ENCODE measurements at regions of chr3 and their contacts with region 1.

Region 1: DNA sequence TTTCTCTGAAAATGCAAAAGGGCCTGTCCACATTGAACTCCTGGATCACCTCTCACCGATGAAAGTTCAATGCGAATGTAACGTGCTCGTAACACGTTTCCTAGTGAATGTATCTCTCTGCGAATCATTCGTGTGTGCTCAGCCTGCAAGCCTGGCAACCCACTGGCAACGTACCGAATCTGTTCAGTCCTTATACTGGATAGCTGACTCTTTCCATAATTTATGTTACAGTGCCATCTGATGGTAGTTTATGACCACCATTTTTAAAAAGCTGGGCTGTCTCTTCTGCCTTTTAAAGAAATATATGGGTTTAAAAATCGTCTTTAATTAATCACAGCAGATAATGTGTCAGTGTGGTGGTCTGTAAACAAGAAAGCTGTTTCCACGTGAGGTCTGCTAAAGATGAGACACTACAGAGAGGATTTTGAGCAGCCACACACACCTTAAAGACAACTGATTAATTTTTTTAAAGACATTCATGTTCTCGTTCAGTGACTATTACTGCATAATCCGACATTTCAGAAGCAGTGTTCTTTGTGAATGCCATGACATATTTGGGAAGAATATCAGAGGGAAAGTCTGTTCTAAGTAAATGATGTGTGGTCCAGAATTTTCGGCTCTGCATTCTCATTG is 69.4 kb upstream of the FOXP1 start:
- DNase-seq: peak; percentile 72
- ATAC-seq: peak; percentile 91
- H3K4me3 ChIP-seq: no peak overlapping the region
- H3K27ac ChIP-seq: no peak overlapping the region
- H3K4me1 ChIP-seq: no peaks in the 10 kb centered on the region
- H3K27me3 ChIP-seq: peaks cover 6% of the 10 kb centered on the region; the same call in 1 of the 2 replicates
- CTCF ChIP-seq: peak; percentile 76
- POLR2A ChIP-seq: no peak
- RAD21 ChIP-seq: peak; percentile 89

Region 2: DNA sequence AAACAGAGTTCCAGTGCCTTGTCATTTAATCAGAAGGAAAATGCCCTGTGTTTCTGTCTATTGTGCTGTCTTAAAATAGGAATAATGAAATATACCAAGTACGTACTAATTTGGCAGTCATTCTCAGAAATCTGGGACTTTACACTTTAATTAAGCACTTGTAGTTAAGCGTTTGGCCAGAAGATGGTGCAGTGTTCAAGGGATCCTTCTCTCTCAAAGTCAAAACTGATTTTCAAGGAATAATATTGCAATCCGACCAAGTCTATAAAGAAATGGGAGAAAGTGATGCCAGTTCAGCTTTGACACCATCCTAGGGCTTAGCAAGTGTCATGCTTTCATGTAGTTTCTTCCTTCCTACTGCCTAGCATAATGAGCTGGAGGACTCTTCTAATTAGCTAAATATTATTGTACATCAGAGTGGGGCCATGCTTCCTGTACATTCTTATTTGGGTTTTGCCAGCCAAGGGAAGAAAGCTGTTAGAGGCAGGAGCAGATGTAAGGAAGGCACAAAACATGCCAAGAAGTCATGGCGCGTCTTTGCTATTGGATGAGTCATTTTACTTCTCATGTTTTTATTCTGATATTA is 1588.6 kb before region 1 on chr3:
- CTCF ChIA-PET with region 1: no interaction called
- POLR2A ChIA-PET with region 1: no interaction called
- dilution Hi-C with region 1: no loop called
- in situ Hi-C with region 1: loop called (anchors 25 kb)
- intact Hi-C with region 1: loop called (anchors 1 kb)
- DNase-seq: peak; percentile 38
- ATAC-seq: peak; percentile 77
- H3K4me3 ChIP-seq: no peak overlapping the region
- H3K27ac ChIP-seq: no peak overlapping the region
- H3K4me1 ChIP-seq: no peaks in the 10 kb centered on the region
- H3K27me3 ChIP-seq: peaks cover 29% of the 10 kb centered on the region
- CTCF ChIP-seq: peak; percentile 64
- POLR2A ChIP-seq: no peak
- RAD21 ChIP-seq: peak; percentile 70

Region 3: GRCh38 chr3:70539908-70540307 is 1113.0 kb before region 1 on chr3:
- CTCF ChIA-PET with region 1: no interaction called
- POLR2A ChIA-PET with region 1: no interaction called
- dilution Hi-C with region 1: no loop called
- in situ Hi-C with region 1: loop called (anchors 10 kb)
- intact Hi-C with region 1: no loop called
- DNase-seq: no peak
- ATAC-seq: no peak
- H3K4me3 ChIP-seq: no peak overlapping the region
- H3K27ac ChIP-seq: no peak overlapping the region
- H3K4me1 ChIP-seq: no peaks in the 10 kb centered on the region
- H3K27me3 ChIP-seq: peaks cover 34% of the 10 kb centered on the region
- CTCF ChIP-seq: no peak
- POLR2A ChIP-seq: no peak
- RAD21 ChIP-seq: no peak

Region 4: DNA sequence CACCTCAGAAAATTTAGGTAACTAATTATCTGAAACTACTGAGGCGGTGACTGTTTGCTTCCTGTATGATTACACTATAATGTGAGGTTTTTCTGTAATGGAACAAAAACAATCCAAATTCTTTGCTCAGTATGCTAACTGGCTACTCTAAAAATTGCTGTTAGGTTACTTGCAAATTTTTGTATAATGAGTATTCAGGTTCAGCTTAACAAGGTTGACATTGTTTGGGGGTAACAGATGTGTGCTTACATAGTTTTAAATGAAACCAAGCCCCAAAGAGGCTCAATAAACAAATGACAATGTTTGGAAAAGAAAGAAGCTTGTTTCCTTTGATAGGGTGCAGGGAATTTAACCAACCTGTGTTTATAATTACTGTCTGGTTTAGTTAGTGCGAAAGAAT is 925.9 kb before region 1 on chr3:
- CTCF ChIA-PET with region 1: no interaction called
- POLR2A ChIA-PET with region 1: no interaction called
- dilution Hi-C with region 1: no loop called
- in situ Hi-C with region 1: no loop called
- intact Hi-C with region 1: loop called (anchors 5 kb)
- DNase-seq: peak; percentile 89
- ATAC-seq: peak; percentile 71
- H3K4me3 ChIP-seq: no peak overlapping the region
- H3K27ac ChIP-seq: no peak overlapping the region
- H3K4me1 ChIP-seq: peaks cover 9% of the 10 kb centered on the region
- H3K27me3 ChIP-seq: no peaks in the 10 kb centered on the region
- CTCF ChIP-seq: no peak
- POLR2A ChIP-seq: no peak
- RAD21 ChIP-seq: no peak

Region 5: DNA sequence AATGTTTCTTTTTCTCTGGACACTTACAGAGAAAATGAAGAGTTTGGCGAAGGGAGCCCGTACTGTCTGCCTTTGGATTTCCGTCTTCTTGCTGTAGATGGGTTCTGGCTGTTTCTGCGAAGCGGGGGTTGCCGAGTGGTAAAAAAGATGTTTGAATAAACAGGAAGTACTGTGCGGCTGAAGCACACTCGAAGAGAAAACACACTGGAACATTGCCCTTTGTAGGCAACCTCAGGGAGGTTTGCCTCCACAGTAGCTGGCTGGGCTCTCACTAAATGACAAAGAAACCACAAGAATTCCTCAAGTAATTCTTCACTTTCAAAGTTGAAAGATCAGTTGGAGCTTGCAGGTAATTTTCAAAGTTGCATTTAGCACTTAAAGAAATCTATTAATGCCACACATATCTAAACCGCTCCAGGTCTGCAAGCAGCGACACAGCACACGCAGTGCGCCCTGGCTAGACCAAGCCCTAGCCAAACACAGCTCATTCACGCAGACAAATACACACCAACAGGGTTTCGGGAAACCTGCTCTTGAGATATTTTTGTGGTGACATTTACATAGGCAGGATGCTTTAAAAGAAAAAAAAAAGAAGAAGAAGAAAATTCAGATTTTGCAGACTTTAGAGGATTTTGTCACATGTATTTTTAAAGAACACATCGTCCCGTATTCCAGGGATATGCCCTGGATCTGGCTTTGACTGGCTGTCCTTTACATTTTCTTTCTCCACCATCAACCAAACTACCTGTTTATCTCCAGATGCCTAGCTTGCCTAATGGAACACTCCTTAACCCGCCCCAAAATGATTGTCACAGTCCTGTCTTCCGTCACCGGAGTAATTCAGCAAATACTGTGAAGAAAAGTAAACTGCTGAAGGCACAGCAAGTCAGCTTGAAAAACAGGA is 522.2 kb before region 1 on chr3:
- CTCF ChIA-PET with region 1: no interaction called
- POLR2A ChIA-PET with region 1: no interaction called
- dilution Hi-C with region 1: no loop called
- in situ Hi-C with region 1: no loop called
- intact Hi-C with region 1: loop called (anchors 2 kb)
- DNase-seq: peak; percentile 83
- ATAC-seq: peak; percentile 66
- H3K4me3 ChIP-seq: peak overlapping the region; percentile 64
- H3K27ac ChIP-seq: peak overlapping the region; percentile 99
- H3K4me1 ChIP-seq: peaks cover 11% of the 10 kb centered on the region
- H3K27me3 ChIP-seq: no peaks in the 10 kb centered on the region
- CTCF ChIP-seq: no peak
- POLR2A ChIP-seq: peak; percentile 64; the same call in 1 of the 2 replicates
- RAD21 ChIP-seq: peak; percentile 27; the same call in 1 of the 2 replicates

Region 6: GRCh38 chr3:71360764-71361163 is 292.1 kb before region 1 on chr3:
- CTCF ChIA-PET with region 1: no interaction called
- POLR2A ChIA-PET with region 1: no interaction called
- dilution Hi-C with region 1: no loop called
- in situ Hi-C with region 1: no loop called
- intact Hi-C with region 1: no loop called
- DNase-seq: no peak
- ATAC-seq: no peak
- H3K4me3 ChIP-seq: no peak overlapping the region
- H3K27ac ChIP-seq: no peak overlapping the region
- H3K4me1 ChIP-seq: no peaks in the 10 kb centered on the region
- H3K27me3 ChIP-seq: no peaks in the 10 kb centered on the region
- CTCF ChIP-seq: no peak
- POLR2A ChIP-seq: no peak
- RAD21 ChIP-seq: no peak

Region 7: DNA sequence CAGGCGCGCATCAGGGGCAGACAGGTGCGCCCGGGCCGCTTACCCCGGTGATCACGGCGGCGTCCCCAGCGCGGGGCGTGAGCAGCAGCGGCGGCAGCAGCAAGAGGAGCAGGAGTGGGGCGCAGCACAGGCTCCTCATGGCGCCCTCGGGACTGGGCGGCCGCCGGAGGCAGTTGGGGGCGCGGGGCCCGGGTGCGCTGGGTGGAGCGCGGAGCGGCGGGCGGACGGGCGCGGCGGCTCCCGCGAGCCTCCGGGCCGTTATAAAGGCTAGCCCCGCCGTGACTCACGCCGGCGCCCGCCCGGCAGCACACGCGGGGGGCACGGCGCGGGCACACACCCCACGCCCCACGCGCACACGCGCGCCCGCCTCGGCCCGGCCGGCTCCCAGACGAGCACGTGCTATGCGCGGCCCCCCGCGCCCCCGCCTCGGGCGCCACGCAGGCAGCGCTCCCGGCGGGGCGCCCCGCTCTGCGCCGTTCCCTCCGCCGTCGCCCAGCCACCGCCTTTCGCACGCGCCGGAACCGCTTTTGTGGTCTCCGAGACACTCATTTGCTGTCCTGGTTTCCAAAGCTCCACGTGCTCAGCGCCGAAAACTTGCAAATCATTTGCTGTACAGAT is 132.1 kb after region 1 on chr3 and contains the start of gene PROK2:
- CTCF ChIA-PET with region 1: no interaction called
- POLR2A ChIA-PET with region 1: no interaction called
- dilution Hi-C with region 1: no loop called
- in situ Hi-C with region 1: no loop called
- intact Hi-C with region 1: no loop called
- DNase-seq: no peak
- ATAC-seq: peak; percentile 66
- H3K4me3 ChIP-seq: no peak within 1 kb of the TSS; the same call in 1 of the 2 replicates
- H3K27ac ChIP-seq: no peak within 1 kb of the TSS
- H3K4me1 ChIP-seq: no peaks in the 10 kb centered on the region
- H3K27me3 ChIP-seq: peaks cover 52% of the 10 kb centered on the region
- CTCF ChIP-seq: no peak
- POLR2A ChIP-seq: no peak
- RAD21 ChIP-seq: no peak
- total RNA-seq, gene PROK2: not detected in 2 replicates

Region 8: DNA sequence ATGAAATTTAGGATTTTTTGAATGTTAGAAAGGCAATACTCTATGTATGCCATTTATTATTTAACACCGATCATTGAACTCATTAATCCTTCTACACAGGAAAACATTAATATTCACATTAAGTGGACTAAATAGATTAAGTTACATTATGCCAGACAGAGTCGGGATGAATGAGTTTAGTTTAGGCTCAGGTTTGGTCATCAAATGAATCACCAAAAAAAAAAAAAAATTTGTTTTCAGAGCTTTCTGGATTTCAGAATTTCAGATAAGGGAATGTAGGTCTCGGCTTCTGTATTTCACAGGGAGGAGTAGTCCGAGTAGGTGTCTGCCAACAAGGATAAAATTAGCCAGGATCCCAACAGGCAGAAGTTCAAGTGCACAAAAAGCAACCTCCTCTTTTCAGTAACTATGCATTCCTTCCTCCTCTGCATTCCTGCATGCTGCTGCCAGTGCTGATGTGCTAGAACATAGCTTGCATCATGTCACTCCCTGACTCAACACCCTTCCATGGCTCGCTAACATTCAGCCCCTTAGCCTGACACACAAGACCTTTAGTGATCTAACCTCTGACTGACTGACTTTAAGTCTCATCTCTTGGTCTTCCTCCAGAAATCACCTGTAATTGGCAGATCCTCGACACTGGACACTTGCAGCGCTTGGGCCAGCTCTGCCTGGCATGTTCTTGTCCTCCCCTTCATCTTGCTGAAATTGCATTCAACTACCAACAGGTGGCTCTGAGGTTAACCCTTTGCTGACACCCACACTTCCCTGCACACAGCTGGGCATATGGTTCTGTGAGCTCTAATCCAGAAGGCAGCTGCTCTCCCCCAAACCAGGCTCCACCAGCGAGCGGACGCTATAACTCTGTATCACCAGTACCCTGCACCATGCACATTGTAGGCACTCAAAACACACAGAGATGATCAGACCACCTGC is 277.4 kb after region 1 on chr3:
- CTCF ChIA-PET with region 1: no interaction called
- POLR2A ChIA-PET with region 1: no interaction called
- dilution Hi-C with region 1: no loop called
- in situ Hi-C with region 1: no loop called
- intact Hi-C with region 1: no loop called
- DNase-seq: peak; percentile 17
- ATAC-seq: peak; percentile 46; the same call in 1 of the 2 replicates
- H3K4me3 ChIP-seq: no peak overlapping the region
- H3K27ac ChIP-seq: no peak overlapping the region
- H3K4me1 ChIP-seq: no peaks in the 10 kb centered on the region
- H3K27me3 ChIP-seq: peaks cover 10% of the 10 kb centered on the region
- CTCF ChIP-seq: no peak
- POLR2A ChIP-seq: no peak
- RAD21 ChIP-seq: no peak

Measured in IMR-90 (cell line).